PC-3 (cell line): ENCODE measurements at regions of chr2 and their contacts with region 1.

Region 1: DNA sequence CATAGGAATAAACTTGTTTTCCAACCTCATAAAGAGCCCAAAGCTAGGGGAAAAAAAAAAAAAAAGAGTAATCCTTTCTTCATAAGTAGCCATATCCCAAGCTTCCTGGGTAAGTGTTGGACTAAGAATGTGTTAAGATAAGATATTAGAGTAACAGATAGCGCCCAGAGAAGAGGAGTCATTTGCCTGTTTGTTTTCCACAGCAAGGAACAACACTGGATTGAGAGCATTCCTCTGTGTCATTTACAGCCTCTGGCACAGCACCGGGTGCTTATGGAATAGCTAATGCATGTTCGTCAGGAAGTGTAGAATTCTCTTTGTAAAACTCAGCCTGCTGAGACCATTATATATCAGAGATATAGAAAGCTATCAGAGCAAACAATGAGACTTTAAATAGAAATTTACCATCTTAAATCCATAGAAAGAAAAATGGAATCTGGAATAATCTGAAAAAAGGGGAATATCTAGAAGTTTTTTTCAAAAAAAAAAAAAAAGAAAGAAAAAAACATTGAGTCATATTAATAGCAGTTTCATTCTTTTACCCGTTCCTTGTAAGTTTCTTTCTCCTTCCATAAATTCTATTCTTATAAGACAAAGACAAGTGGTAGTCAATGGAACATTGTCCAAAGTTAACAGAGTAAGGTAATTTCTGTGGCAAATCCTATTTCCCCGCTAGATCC is 37.6 kb downstream of the LRP2 start:
- DNase-seq: peak; percentile 26
- ATAC-seq: peak; percentile 67
- H3K4me3 ChIP-seq: no peak overlapping the region
- H3K27ac ChIP-seq: no peak overlapping the region
- H3K4me1 ChIP-seq: no peaks in the 10 kb centered on the region
- H3K27me3 ChIP-seq: peaks cover 41% of the 10 kb centered on the region
- CTCF ChIP-seq: no peak

Region 2: DNA sequence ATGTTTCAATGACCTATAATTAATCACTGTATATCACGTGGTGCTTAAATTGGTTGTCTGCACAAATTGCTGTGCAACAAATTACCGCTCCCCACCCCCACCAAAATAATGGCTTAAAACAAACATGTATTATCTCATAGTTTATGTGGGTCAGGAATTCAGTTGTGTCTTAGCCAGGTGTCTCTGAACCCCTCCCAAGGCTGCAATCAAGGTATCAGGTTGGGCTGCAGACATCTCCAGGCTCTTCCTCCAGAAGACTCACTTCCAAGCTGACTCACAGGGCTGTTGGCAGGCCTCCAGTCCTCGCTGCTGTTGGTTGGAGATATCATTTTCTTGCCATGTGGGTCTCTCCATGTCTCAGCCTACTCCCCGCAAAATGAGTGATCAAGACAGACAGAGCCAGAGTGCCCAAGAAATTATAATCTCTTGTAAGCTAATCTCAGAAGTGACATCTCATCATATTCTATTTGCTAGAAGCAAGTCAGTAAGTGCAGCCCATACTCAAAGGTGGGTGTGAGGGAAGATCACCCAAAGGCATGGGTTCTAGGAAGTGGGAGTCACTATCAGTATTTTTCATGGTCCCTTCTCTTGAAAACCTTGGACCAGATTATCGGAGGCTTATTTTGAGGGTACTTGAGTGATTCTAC is 472.9 kb before region 1 on chr2:
- CTCF ChIA-PET with region 1: no interaction called
- POLR2A ChIA-PET with region 1: no interaction called
- intact Hi-C with region 1: no loop called
- DNase-seq: peak; percentile 91
- ATAC-seq: peak; percentile 93
- H3K4me3 ChIP-seq: no peak overlapping the region
- H3K27ac ChIP-seq: no peak overlapping the region
- H3K4me1 ChIP-seq: peaks cover 10% of the 10 kb centered on the region
- H3K27me3 ChIP-seq: no peaks in the 10 kb centered on the region
- CTCF ChIP-seq: no peak

Region 3: GRCh38 chr2:169336695-169337094 is 12.0 kb after region 1 on chr2:
- CTCF ChIA-PET with region 1: no interaction called
- POLR2A ChIA-PET with region 1: no interaction called
- intact Hi-C with region 1: no loop called
- DNase-seq: no peak
- ATAC-seq: no peak
- H3K4me3 ChIP-seq: no peak overlapping the region
- H3K27ac ChIP-seq: no peak overlapping the region
- H3K4me1 ChIP-seq: no peaks in the 10 kb centered on the region
- H3K27me3 ChIP-seq: peaks cover 61% of the 10 kb centered on the region
- CTCF ChIP-seq: no peak

Region 4: GRCh38 chr2:169354244-169354643 is 29.5 kb after region 1 on chr2:
- CTCF ChIA-PET with region 1: no interaction called
- POLR2A ChIA-PET with region 1: no interaction called
- intact Hi-C with region 1: loop called (anchors 1 kb)
- DNase-seq: no peak
- ATAC-seq: no peak
- H3K4me3 ChIP-seq: no peak overlapping the region
- H3K27ac ChIP-seq: no peak overlapping the region
- H3K4me1 ChIP-seq: no peaks in the 10 kb centered on the region
- H3K27me3 ChIP-seq: peaks cover 65% of the 10 kb centered on the region
- CTCF ChIP-seq: no peak